ENCODE measurements at regions of chr11 and their contacts with region 1.

Region 1: GRCh38 chr11:83156150-83156995 is 558 bp upstream of the PCF11 start:
- DNase-seq: peak; percentile 82
- ATAC-seq: peak; percentile 88
- H3K4me3 Mint-ChIP-seq: peak overlapping the region; percentile 100
- H3K27ac Mint-ChIP-seq: peak overlapping the region; percentile 100
- H3K4me1 Mint-ChIP-seq: peaks cover 34% of the 10 kb centered on the region
- H3K27me3 Mint-ChIP-seq: no peaks in the 10 kb centered on the region
- CTCF ChIP-seq: no peak

Region 2: GRCh38 chr11:82927254-82927880 is 229.0 kb before region 1 on chr11:
- CTCF ChIA-PET with region 1: interaction called, 4 read pairs
- POLR2A ChIA-PET with region 1: interaction called, 13 read pairs
- intact Hi-C with region 1: loop called (anchors 2 kb)
- DNase-seq: no peak
- ATAC-seq: peak; percentile 76
- H3K4me3 Mint-ChIP-seq: peak overlapping the region; percentile 45
- H3K27ac Mint-ChIP-seq: peak overlapping the region; percentile 75
- H3K4me1 Mint-ChIP-seq: peaks cover 85% of the 10 kb centered on the region
- H3K27me3 Mint-ChIP-seq: no peaks in the 10 kb centered on the region
- CTCF ChIP-seq: no peak

Region 3: GRCh38 chr11:83051760-83052671 is 104.4 kb before region 1 on chr11:
- CTCF ChIA-PET with region 1: no interaction called
- POLR2A ChIA-PET with region 1: interaction called, 13 read pairs
- intact Hi-C with region 1: no loop called
- DNase-seq: no peak
- ATAC-seq: no peak
- H3K4me3 Mint-ChIP-seq: no peak overlapping the region
- H3K27ac Mint-ChIP-seq: peak overlapping the region; percentile 41
- H3K4me1 Mint-ChIP-seq: peaks cover 90% of the 10 kb centered on the region
- H3K27me3 Mint-ChIP-seq: no peaks in the 10 kb centered on the region
- CTCF ChIP-seq: no peak

Region 4: GRCh38 chr11:83115551-83115950 is 40.8 kb before region 1 on chr11:
- CTCF ChIA-PET with region 1: no interaction called
- POLR2A ChIA-PET with region 1: interaction called, 22 read pairs
- intact Hi-C with region 1: loop called (anchors 1 kb)
- DNase-seq: no peak
- ATAC-seq: no peak
- H3K4me3 Mint-ChIP-seq: peak overlapping the region; percentile 64
- H3K27ac Mint-ChIP-seq: no peak overlapping the region
- H3K4me1 Mint-ChIP-seq: peaks cover 37% of the 10 kb centered on the region
- H3K27me3 Mint-ChIP-seq: no peaks in the 10 kb centered on the region
- CTCF ChIP-seq: no peak

Region 5: DNA sequence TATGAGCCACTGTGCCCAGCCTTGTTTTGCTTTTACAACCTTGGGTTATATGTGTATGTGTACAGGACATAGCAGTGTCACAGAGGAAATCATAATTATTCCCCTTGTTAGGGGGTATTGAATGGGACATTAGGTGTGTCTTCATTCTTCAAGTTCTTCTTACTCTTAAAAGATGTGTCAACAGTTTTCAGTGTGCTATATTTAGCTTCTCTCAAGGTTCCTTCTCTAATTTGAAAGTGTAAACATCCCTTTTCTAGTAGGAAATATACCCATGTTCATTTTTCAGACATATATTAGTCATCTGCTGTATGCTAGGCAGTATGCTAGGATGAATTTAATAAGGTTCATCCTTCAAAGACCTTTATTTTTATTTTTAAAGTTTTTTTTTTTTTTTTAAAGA is 17.6 kb after region 1 on chr11:
- CTCF ChIA-PET with region 1: no interaction called
- POLR2A ChIA-PET with region 1: interaction called, 7 read pairs
- intact Hi-C with region 1: loop called (anchors 2 kb)
- DNase-seq: no peak
- ATAC-seq: peak; percentile 43
- H3K4me3 Mint-ChIP-seq: peak overlapping the region; percentile 55
- H3K27ac Mint-ChIP-seq: peak overlapping the region; percentile 35
- H3K4me1 Mint-ChIP-seq: peaks cover 71% of the 10 kb centered on the region
- H3K27me3 Mint-ChIP-seq: no peaks in the 10 kb centered on the region
- CTCF ChIP-seq: no peak

Region 6: DNA sequence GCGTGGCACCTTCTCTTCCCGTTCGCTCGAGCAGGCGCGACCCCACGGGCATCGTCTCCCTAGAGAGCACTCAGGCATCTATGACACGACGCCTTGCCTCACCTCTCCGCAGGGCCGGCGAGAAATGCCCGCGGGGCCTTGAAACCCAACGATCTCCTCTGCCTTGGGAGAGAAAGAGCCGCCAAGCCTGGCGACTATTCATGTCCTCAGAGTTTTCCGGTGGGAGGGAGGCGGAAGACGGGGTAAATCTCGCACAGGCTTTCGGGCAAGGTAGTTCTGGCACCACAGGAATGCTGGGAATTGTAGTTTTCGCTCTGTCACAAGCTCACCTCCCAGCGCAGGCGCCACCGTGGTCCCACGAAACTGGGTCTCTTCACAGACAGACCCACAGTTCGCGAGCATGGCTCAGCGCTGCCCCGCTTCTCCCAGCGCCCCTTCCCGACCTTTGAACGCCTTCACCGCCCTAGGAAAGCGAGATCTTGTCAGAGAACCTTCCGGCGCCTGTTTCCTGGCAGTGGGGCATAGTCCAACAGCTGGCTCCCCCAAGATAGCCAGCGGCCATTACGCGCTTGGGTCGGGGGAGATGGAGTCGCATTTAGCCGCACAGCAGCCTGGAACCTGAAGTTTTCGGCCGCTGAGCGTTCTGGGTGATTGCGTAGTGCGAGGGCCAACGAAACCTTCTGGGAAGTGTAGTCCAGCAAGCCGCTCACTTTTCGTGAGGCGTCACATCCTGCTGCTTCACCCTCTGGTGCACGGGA is 129.6 kb after region 1 on chr11 and contains the start of gene CCDC90B:
- CTCF ChIA-PET with region 1: no interaction called
- POLR2A ChIA-PET with region 1: interaction called, 15 read pairs
- intact Hi-C with region 1: loop called (anchors 1 kb)
- DNase-seq: peak; percentile 86
- ATAC-seq: peak; percentile 88
- H3K4me3 Mint-ChIP-seq: peak within 1 kb of the TSS; percentile 99
- H3K27ac Mint-ChIP-seq: peak within 1 kb of the TSS; percentile 100
- H3K4me1 Mint-ChIP-seq: peaks cover 61% of the 10 kb centered on the region
- H3K27me3 Mint-ChIP-seq: no peaks in the 10 kb centered on the region
- CTCF ChIP-seq: no peak
- total RNA-seq, gene CCDC90B: 25.8 and 29.2 TPM in 2 replicates

Region 7: DNA sequence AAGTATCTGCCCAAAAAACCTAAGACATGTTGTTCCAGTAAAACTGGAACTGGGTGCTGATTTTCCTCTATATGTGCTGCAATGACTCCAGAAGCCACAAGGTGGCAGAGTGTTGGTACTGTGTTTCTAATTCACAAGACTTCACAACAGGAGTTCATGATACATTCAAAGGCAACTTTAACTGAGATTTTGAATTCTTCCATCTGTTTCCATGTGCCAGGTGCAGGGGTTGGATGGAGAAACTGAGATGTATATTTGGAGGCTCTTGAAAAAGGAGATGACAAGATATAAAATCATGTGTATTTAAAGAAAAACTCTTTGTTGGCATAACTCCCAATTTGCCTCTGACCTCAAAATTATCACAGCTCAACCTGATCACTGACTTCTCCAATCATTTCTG is 1228.4 kb after region 1 on chr11:
- CTCF ChIA-PET with region 1: no interaction called
- POLR2A ChIA-PET with region 1: no interaction called
- intact Hi-C with region 1: no loop called
- DNase-seq: no peak
- ATAC-seq: no peak
- H3K4me3 Mint-ChIP-seq: no peak overlapping the region
- H3K27ac Mint-ChIP-seq: no peak overlapping the region
- H3K4me1 Mint-ChIP-seq: no peaks in the 10 kb centered on the region
- H3K27me3 Mint-ChIP-seq: no peaks in the 10 kb centered on the region
- CTCF ChIP-seq: peak; percentile 93